ENCODE measurements at regions of chr5 and their contacts with region 1.

Region 1: DNA sequence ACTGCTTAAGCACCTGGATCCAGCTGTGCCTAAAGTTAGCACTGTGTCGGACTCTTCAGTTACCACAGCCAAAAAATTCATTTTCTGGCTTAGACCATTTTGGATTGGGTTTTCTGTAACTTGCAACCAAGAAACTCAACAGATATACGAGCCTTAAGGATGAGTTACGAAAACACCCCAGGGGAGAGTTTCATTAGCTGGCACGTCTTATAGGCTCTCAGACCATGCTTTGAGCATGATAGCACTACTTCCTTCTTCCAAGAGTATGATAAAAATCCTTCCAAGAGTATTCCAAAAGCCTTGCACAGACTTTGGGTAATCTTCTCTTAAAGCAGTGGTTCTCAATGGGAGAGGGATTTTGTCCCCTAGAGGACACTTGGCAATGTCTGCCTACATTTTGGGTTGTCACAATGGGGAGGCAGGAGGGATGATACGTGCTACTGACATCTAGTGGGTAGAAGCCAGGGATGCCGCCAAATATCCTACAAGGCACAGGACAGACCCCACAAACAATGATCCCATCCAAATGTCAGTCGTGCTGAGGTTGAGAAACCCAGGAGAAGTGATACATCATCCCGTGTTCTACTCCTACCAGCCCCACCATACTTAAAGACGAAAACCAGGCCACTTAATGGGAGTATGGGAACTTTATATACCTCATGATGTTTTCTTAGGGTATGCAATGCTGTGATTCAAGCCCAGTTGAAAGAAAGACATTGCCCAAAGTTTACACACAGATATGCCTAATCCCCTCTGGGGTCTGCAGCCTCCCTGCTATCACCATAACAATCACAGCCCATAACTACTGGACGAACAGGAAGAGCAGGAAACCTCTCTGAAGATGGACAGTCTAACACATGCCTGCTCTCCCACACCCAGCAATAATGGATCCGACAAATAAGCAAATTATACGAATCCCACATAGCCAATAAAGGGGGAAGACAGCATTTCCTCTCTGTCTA is 65.0 kb downstream of the SMIM23 start:
- DNase-seq: no peak
- ATAC-seq: peak in 3 of 4 donors; percentile 8 to 39 (median 31)
- H3K4me3 ChIP-seq: no peak overlapping the region
- H3K27ac ChIP-seq: peak overlapping the region in 1 of 12 donors; percentile 36
- H3K4me1 ChIP-seq: peaks cover 0 to 16% (median 0%) of the 10 kb centered on the region in 12 donors
- H3K27me3 ChIP-seq: no peaks in the 10 kb centered on the region
- CTCF ChIP-seq: peak in 6 of 12 donors; percentile 16 to 36 (median 30)
- POLR2A ChIP-seq: no peak

Region 2: GRCh38 chr5:171640480-171640879 is 210.1 kb before region 1 on chr5:
- intact Hi-C with region 1: loop called in 2 of 10 experiments (anchors 5 to 10 kb)
- DNase-seq: peak in 4 of 5 donors; percentile 49 to 79 (median 68)
- ATAC-seq: peak; percentile 84 to 92 (median 90)
- H3K4me3 ChIP-seq: no peak overlapping the region
- H3K27ac ChIP-seq: peak overlapping the region; percentile 58 to 93 (median 76)
- H3K4me1 ChIP-seq: peaks cover 0 to 30% (median 14%) of the 10 kb centered on the region in 12 donors
- H3K27me3 ChIP-seq: no peaks in the 10 kb centered on the region
- CTCF ChIP-seq: no peak
- POLR2A ChIP-seq: no peak

Region 3: GRCh38 chr5:171701100-171701541 is 149.5 kb before region 1 on chr5:
- intact Hi-C with region 1: no loop called
- DNase-seq: peak in 4 of 5 donors; percentile 33 to 45 (median 36)
- ATAC-seq: peak; percentile 79 to 90 (median 84)
- H3K4me3 ChIP-seq: no peak overlapping the region
- H3K27ac ChIP-seq: peak overlapping the region in 7 of 12 donors; percentile 30 to 84 (median 73)
- H3K4me1 ChIP-seq: peaks cover 0 to 18% (median 2%) of the 10 kb centered on the region in 12 donors
- H3K27me3 ChIP-seq: no peaks in the 10 kb centered on the region
- CTCF ChIP-seq: no peak
- POLR2A ChIP-seq: no peak

Region 4: GRCh38 chr5:171743436-171744076 is 107.0 kb before region 1 on chr5:
- intact Hi-C with region 1: loop called in 2 of 10 experiments (anchors 5 to 10 kb)
- DNase-seq: no peak
- ATAC-seq: no peak
- H3K4me3 ChIP-seq: no peak overlapping the region
- H3K27ac ChIP-seq: no peak overlapping the region
- H3K4me1 ChIP-seq: peaks cover 0 to 17% (median 0%) of the 10 kb centered on the region in 12 donors
- H3K27me3 ChIP-seq: no peaks in the 10 kb centered on the region
- CTCF ChIP-seq: no peak
- POLR2A ChIP-seq: no peak